ENCODE measurements at regions of chr1 and their contacts with region 1.

Region 1: GRCh38 chr1:2233997-2234761 is 6.1 kb downstream of the SKI start:
- DNase-seq: peak; percentile 98
- H3K4me3 ChIP-seq: peak overlapping the region; percentile 74 to 96 (median 81)
- H3K27ac ChIP-seq: peak overlapping the region; percentile 89 to 94 (median 92)
- H3K4me1 ChIP-seq: peaks cover 92 to 100% (median 99%) of the 10 kb centered on the region in 4 donors
- H3K27me3 ChIP-seq: no peaks in the 10 kb centered on the region
- CTCF ChIP-seq: no peak
- EP300 ChIP-seq: no peak
- POLR2A ChIP-seq: no peak

Region 2: DNA sequence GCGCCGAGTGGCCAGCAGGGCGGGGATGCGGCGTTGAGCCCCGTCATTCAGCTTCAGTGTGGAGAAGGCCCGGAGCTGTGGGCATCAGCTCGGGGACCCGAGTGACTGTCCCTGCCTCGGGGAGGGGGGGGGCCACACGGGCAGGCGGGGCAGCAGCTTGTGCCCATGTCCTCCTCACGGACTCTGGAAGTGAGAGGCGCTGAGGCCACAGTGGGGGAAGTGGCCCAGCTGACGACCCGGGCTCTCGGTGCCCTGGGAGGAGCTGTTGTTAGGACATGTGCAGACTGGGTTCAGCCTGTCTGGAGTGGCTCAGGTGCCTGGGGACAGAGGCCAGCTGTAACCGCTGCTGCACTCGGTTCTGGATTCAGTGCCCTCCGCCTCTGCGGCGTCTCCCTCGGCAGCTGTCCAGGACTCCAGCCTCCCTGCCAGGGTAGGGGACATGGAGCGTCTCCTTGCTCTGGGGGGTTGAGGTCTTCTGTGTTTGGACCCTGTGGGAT is 65.0 kb after region 1 on chr1:
- intact Hi-C with region 1: loop called (anchors 5 kb)
- DNase-seq: no peak
- H3K4me3 ChIP-seq: peak overlapping the region; percentile 18 to 41 (median 24)
- H3K27ac ChIP-seq: peak overlapping the region; percentile 71 to 84 (median 78)
- H3K4me1 ChIP-seq: peaks cover 59 to 100% (median 95%) of the 10 kb centered on the region in 4 donors
- H3K27me3 ChIP-seq: no peaks in the 10 kb centered on the region
- CTCF ChIP-seq: no peak
- EP300 ChIP-seq: no peak
- POLR2A ChIP-seq: no peak